Body of pancreas (tissue), 4 donors: ENCODE measurements at regions of chr19 and their contacts with region 1.

Region 1: GRCh38 chr19:47436712-47437401 is 17.5 kb upstream of the MEIS3 start:
- DNase-seq: peak; percentile 83 to 91 (median 88)
- ATAC-seq: peak; percentile 94
- H3K4me3 ChIP-seq: no peak overlapping the region
- H3K27ac ChIP-seq: no peak overlapping the region
- H3K4me1 ChIP-seq: no peaks in the 10 kb centered on the region
- H3K27me3 ChIP-seq: no peaks in the 10 kb centered on the region
- CTCF ChIP-seq: peak; percentile 75 to 95 (median 90)
- POLR2A ChIP-seq: no peak

Region 2: DNA sequence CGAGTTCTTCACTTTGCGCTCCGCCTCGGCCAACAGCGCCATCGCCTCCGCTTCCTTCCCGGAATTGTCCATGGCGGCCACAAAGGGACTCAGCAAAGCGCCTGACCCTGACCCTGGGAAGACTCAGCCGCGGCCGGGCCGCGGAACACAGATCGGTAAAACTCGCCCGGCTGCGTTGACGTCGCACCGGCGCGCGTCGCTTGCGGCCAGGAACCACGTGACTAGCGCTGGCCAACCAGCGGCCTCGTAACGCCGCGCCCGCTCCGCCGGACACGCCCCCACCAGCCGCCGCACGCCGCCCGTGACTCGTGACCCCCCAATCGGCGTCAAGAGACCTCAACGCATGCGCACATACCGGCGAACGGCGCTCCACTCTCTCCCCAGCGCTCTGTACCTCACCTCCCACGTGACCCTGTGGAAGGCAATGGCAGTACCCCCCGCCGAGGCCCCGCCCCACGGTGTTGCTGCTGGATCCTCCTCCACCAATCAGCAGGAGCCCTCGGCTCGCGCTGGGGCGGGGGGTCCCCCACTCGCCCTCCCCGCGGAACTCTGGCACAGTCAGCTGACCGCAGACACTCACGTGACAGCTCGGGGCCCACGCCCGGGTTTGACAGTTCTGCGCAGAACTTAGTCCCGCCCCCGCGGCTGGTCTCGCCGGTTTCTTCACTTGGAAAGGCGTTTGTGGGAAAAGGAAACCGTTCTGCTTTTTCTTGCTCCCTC is 78.2 kb after region 1 on chr19 and contains the start of gene NAPA:
- intact Hi-C with region 1: loop called (anchors 5 kb)
- DNase-seq: peak; percentile 100
- ATAC-seq: peak; percentile 91
- H3K4me3 ChIP-seq: peak within 1 kb of the TSS; percentile 61 to 85
- H3K27ac ChIP-seq: peak within 1 kb of the TSS; percentile 92 to 100 (median 98)
- H3K4me1 ChIP-seq: peaks cover 42% of the 10 kb centered on the region
- H3K27me3 ChIP-seq: no peaks in the 10 kb centered on the region
- CTCF ChIP-seq: no peak
- POLR2A ChIP-seq: peak; percentile 94 to 97 (median 95)
- total RNA-seq, gene NAPA: 71.5 to 94.9 TPM

Region 3: GRCh38 chr19:47707135-47707925 is 270.5 kb after region 1 on chr19:
- intact Hi-C with region 1: loop called (anchors 5 kb)
- DNase-seq: peak; percentile 74 to 79 (median 78)
- ATAC-seq: peak; percentile 89
- H3K4me3 ChIP-seq: no peak overlapping the region
- H3K27ac ChIP-seq: no peak overlapping the region
- H3K4me1 ChIP-seq: no peaks in the 10 kb centered on the region
- H3K27me3 ChIP-seq: no peaks in the 10 kb centered on the region
- CTCF ChIP-seq: peak; percentile 53 to 86 (median 69)
- POLR2A ChIP-seq: no peak